CD4-positive, alpha-beta T cell (primary cell): ENCODE measurements at regions of chr9 and their contacts with region 1.

Region 1: GRCh38 chr9:35732122-35732799 is at the starts of genes CREB3 and TLN1:
- DNase-seq: peak; percentile 90 to 99 (median 96)
- ATAC-seq: peak; percentile 91
- H3K4me3 ChIP-seq: peak within 1 kb of the TSS; percentile 91
- H3K4me3 Mint-ChIP-seq: peak within 1 kb of the TSS; percentile 90
- H3K27ac ChIP-seq: peak within 1 kb of the TSS; percentile 89 to 95
- H3K27ac Mint-ChIP-seq: no peak within 1 kb of the TSS
- H3K4me1 ChIP-seq: peaks cover 71% of the 10 kb centered on the region
- H3K4me1 Mint-ChIP-seq: peaks cover 22% of the 10 kb centered on the region
- H3K27me3 ChIP-seq: no peaks in the 10 kb centered on the region
- H3K27me3 Mint-ChIP-seq: no peaks in the 10 kb centered on the region
- CTCF ChIP-seq: no peak
- total RNA-seq, gene CREB3: 13.7 to 15.4 TPM
- total RNA-seq, gene TLN1: 149 to 151 TPM

Region 2: GRCh38 chr9:35116898-35117551 is 615.2 kb before region 1 on chr9:
- CTCF ChIA-PET with region 1: no interaction called
- POLR2A ChIA-PET with region 1: interaction called, 3 read pairs
- intact Hi-C with region 1: loop called in 1 of 2 experiments (anchors 10 kb)
- DNase-seq: peak; percentile 77 to 96 (median 84)
- ATAC-seq: peak; percentile 67
- H3K4me3 ChIP-seq: peak overlapping the region; percentile 66
- H3K4me3 Mint-ChIP-seq: peak overlapping the region; percentile 94
- H3K27ac ChIP-seq: peak overlapping the region; percentile 81 to 83
- H3K27ac Mint-ChIP-seq: peak overlapping the region; percentile 79
- H3K4me1 ChIP-seq: peaks cover 46% of the 10 kb centered on the region
- H3K4me1 Mint-ChIP-seq: peaks cover 42% of the 10 kb centered on the region
- H3K27me3 ChIP-seq: no peaks in the 10 kb centered on the region
- H3K27me3 Mint-ChIP-seq: no peaks in the 10 kb centered on the region
- CTCF ChIP-seq: peak; percentile 90

Region 3: DNA sequence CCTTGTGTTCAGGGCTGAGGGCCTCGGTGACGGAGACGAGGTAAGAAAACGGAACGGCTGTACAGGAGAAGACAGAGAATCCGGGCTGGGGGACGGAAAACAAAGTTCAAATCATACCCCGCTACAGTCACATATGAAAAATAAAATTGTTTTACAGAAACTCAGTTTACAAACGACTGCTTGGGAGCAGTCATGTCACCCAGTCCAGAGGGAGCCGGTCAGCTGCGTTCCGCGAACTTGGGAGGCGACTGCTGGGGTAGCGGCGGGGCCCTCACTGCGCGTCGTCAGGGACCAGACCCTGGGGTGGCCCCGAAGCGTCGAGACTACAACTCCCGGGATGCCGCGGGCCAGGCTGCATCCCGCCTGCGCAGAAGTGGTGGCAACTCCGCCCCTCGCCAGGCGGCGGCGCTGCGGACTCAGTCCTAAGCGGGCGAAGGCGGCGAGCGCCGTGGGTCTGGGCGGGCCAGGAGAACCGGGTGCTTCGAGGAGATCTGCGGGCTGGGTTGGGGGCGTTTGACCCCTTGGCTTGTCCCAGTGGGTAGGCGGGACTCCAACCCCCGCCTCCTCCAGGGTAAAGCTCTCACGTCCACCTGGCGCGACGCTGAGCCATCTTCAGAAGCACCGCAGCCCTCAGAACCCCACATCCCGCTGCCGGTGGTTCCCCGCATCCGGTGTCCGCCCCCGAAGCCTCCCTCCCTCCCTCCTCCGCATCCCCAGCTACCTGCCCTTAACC is 85.6 kb before region 1 on chr9:
- CTCF ChIA-PET with region 1: interaction called, 40 read pairs
- POLR2A ChIA-PET with region 1: interaction called, 84 read pairs
- intact Hi-C with region 1: loop called (anchors 2 kb)
- DNase-seq: peak; percentile 83 to 96 (median 88)
- ATAC-seq: peak; percentile 83
- H3K4me3 ChIP-seq: peak overlapping the region; percentile 72
- H3K4me3 Mint-ChIP-seq: peak overlapping the region; percentile 94
- H3K27ac ChIP-seq: peak overlapping the region; percentile 80 to 82
- H3K27ac Mint-ChIP-seq: peak overlapping the region; percentile 94
- H3K4me1 ChIP-seq: peaks cover 78% of the 10 kb centered on the region
- H3K4me1 Mint-ChIP-seq: peaks cover 73% of the 10 kb centered on the region
- H3K27me3 ChIP-seq: no peaks in the 10 kb centered on the region
- H3K27me3 Mint-ChIP-seq: no peaks in the 10 kb centered on the region
- CTCF ChIP-seq: peak; percentile 96

Region 4: DNA sequence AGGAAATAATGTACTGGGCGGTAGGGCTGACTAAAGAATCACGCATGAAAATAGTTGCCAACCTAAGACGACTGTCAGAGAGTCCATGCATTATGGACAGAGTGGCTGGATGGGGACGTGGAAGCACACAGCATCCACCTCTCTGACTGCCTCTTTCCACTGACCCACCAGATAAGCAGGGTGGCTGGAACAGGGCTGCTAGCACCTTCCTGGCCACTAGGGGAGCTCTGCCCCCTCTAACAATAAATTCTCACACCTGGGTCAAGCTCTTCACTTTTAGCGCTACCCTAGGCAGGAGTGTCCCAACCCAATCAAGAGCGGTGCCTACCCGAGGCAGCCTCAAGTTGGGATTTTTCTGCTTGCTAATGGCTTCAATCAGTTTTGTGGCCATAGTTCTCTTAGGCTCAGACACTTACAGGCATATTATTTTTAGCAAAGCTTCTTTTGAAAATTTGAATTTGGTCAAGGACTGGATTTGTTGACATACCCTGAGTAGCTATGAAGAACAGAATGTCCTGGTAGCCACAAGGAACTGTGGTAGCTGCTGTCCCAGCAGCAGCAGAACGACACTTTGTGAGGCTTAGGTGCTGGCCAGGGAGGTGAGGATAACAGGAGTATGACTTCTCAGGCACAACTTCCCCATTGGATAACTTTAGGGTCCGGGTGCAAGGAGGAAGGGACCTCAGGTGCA is 35.6 kb before region 1 on chr9:
- CTCF ChIA-PET with region 1: interaction called, 26 read pairs
- POLR2A ChIA-PET with region 1: interaction called, 12 read pairs
- intact Hi-C with region 1: loop called in 1 of 2 experiments (anchors 2 kb)
- DNase-seq: peak; percentile 29 to 78 (median 46)
- ATAC-seq: peak; percentile 94
- H3K4me3 ChIP-seq: no peak overlapping the region
- H3K4me3 Mint-ChIP-seq: no peak overlapping the region
- H3K27ac ChIP-seq: no peak overlapping the region
- H3K27ac Mint-ChIP-seq: peak overlapping the region; percentile 24
- H3K4me1 ChIP-seq: peaks cover 10% of the 10 kb centered on the region
- H3K4me1 Mint-ChIP-seq: peaks cover 18% of the 10 kb centered on the region
- H3K27me3 ChIP-seq: no peaks in the 10 kb centered on the region
- H3K27me3 Mint-ChIP-seq: no peaks in the 10 kb centered on the region
- CTCF ChIP-seq: peak; percentile 97

Region 5: DNA sequence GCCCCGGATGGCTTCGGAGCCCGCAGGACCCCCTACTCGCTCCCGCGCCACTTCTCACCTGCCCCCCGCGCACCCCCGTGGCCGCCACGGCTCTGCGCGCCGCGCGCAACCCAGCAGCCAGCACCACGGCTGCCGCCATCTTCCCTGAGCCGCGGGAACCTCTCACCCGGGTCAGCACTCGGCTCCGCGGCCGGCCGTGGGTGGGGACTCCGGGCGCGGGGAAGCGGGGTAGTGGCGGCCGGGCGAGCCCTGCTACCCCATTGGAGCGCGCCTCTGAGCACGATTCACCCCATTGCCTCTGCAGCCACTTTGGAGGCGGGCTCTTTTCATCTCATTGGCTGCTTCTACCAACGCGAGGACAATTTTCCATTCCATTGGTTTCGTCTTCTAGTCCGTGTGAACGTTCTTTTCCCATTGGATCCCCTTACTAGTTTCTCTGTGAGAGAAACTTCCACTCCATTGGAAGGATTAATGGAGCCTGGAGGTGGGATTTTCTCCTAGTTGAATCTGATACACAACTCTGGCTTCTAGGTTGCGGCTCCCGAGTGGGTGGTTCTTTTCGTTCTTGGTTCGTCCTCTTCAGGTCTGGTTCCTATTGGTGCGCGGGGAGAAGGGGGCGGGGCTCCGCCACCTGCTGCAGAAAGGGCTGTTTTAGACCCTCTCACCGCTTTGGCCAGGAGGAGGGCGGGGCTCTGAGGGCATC is 82.7 kb after region 1 on chr9 and contains the start of gene HINT2:
- CTCF ChIA-PET with region 1: interaction called, 5 read pairs
- POLR2A ChIA-PET with region 1: interaction called, 13 read pairs
- intact Hi-C with region 1: loop called (anchors 2 to 5 kb)
- DNase-seq: peak; percentile 93 to 99 (median 96)
- ATAC-seq: peak; percentile 79
- H3K4me3 ChIP-seq: peak within 1 kb of the TSS; percentile 80
- H3K4me3 Mint-ChIP-seq: peak within 1 kb of the TSS; percentile 91
- H3K27ac ChIP-seq: peak within 1 kb of the TSS; percentile 68 to 87
- H3K27ac Mint-ChIP-seq: peak within 1 kb of the TSS; percentile 91
- H3K4me1 ChIP-seq: peaks cover 42% of the 10 kb centered on the region
- H3K4me1 Mint-ChIP-seq: peaks cover 43% of the 10 kb centered on the region
- H3K27me3 ChIP-seq: no peaks in the 10 kb centered on the region
- H3K27me3 Mint-ChIP-seq: no peaks in the 10 kb centered on the region
- CTCF ChIP-seq: no peak
- total RNA-seq, gene HINT2: 10.9 to 12.6 TPM

Region 6: GRCh38 chr9:36337865-36338264 is 605.6 kb after region 1 on chr9:
- CTCF ChIA-PET with region 1: no interaction called
- POLR2A ChIA-PET with region 1: no interaction called
- intact Hi-C with region 1: no loop called
- DNase-seq: no peak
- ATAC-seq: no peak
- H3K4me3 ChIP-seq: no peak overlapping the region
- H3K4me3 Mint-ChIP-seq: no peak overlapping the region
- H3K27ac ChIP-seq: no peak overlapping the region
- H3K27ac Mint-ChIP-seq: no peak overlapping the region
- H3K4me1 ChIP-seq: no peaks in the 10 kb centered on the region
- H3K4me1 Mint-ChIP-seq: no peaks in the 10 kb centered on the region
- H3K27me3 ChIP-seq: no peaks in the 10 kb centered on the region
- H3K27me3 Mint-ChIP-seq: no peaks in the 10 kb centered on the region
- CTCF ChIP-seq: no peak

Region 7: GRCh38 chr9:36765468-36766341 is 1033.4 kb after region 1 on chr9:
- CTCF ChIA-PET with region 1: no interaction called
- POLR2A ChIA-PET with region 1: no interaction called
- intact Hi-C with region 1: loop called in 1 of 2 experiments (anchors 10 kb)
- DNase-seq: peak; percentile 77 to 95 (median 90)
- ATAC-seq: peak; percentile 99
- H3K4me3 ChIP-seq: peak overlapping the region; percentile 63
- H3K4me3 Mint-ChIP-seq: no peak overlapping the region
- H3K27ac ChIP-seq: peak overlapping the region in 1 of 2 donors; percentile 40
- H3K27ac Mint-ChIP-seq: no peak overlapping the region
- H3K4me1 ChIP-seq: peaks cover 17% of the 10 kb centered on the region
- H3K4me1 Mint-ChIP-seq: no peaks in the 10 kb centered on the region
- H3K27me3 ChIP-seq: peaks cover 2 to 3% of the 10 kb centered on the region in 2 experiments
- H3K27me3 Mint-ChIP-seq: peaks cover 16% of the 10 kb centered on the region
- CTCF ChIP-seq: no peak